ENCODE measurements at regions of chr12 and their contacts with region 1.

Region 1: GRCh38 chr12:68821357-68822188 is 13.6 kb downstream of the MDM2 start:
- DNase-seq: no peak
- ATAC-seq: peak; percentile 53
- H3K4me3 ChIP-seq: no peak overlapping the region
- H3K27ac ChIP-seq: no peak overlapping the region
- H3K4me1 ChIP-seq: no peaks in the 10 kb centered on the region
- H3K27me3 ChIP-seq: no peaks in the 10 kb centered on the region
- CTCF ChIP-seq: no peak

Region 2: DNA sequence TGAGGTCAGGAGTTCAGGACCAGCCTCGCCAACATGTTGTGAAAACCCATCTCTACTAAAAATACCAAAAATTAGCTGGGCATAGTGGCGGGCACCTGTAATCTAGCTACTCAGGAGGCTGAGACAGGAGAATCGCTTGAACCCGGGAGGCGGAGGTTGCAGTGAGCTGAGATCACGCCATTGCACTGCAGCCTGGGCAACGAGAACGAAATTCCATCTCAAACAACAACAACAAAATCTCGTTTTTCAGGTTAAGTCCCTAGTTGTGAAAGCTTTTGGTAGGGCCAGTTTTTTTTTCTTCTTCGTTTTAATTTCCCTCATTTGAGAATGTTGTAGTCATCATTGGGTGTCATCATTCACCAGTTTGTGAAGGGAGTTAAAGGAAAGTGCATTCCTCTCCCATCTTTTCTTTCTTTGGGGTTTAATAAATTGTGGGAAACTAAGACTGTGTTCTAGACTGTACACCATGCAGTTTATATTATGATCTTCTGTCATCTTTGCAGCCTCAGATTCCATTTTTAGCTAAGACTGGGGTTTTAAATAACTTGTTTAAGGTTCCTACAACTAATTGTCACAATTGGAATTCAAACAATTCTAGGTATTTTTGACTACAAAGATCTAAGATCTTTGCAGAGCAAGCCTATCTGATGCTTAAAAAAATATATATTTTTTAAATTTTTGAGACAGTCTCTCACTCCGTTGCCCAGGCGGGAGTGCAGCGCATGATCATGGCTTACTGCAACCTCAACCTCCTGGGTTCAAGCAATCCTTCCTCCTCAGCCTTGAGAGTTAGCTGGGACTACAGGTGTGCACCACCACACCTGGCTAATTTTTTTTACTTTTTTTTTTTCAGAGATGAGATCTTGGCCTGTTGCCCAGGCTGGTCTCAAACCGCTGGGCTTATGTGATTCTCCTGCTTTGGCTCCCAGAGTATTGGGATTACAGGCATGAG is 10.6 kb after region 1 on chr12:
- CTCF ChIA-PET with region 1: no interaction called
- POLR2A ChIA-PET with region 1: interaction called, 12 read pairs
- in situ Hi-C with region 1: no loop called
- intact Hi-C with region 1: no loop called
- DNase-seq: no peak
- ATAC-seq: no peak
- H3K4me3 ChIP-seq: no peak overlapping the region
- H3K27ac ChIP-seq: no peak overlapping the region
- H3K4me1 ChIP-seq: no peaks in the 10 kb centered on the region
- H3K27me3 ChIP-seq: no peaks in the 10 kb centered on the region
- CTCF ChIP-seq: no peak

Region 3: DNA sequence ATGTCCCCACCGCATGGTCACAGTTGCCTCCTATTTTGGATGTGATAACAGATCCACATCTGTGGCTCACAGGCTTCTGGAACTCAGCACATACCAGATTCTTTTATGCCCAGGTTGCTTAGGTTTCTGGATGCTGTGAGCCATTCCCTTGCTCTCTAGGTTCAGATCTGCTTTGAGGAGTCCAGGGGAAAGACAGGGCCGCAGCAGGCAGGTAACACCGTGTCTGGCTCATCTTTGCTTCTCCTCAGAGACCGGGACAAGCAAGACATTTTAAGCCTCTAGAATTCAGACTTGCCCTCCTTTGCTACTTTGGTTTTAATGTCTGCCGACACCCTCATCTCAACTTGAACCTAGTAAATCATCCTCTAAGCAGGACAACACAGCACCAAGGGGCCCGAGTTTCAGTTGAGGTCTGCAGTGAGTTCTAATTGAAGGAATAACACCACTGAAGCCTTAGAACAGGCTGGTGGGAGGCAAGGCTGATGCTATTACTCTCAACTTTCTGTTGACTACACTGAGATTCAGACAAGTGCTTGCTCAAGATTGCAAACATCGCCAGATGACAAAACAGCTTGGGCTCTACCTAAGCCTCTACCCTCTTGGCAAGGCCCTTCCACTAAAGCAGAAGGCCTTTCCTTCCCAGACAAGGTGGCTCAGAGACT is 41.7 kb after region 1 on chr12:
- CTCF ChIA-PET with region 1: no interaction called
- POLR2A ChIA-PET with region 1: no interaction called
- in situ Hi-C with region 1: no loop called
- intact Hi-C with region 1: no loop called
- DNase-seq: no peak
- ATAC-seq: 0 out of 2 replicates have a peak, but pooled peaks have one; percentile 44
- H3K4me3 ChIP-seq: no peak overlapping the region
- H3K27ac ChIP-seq: no peak overlapping the region
- H3K4me1 ChIP-seq: no peaks in the 10 kb centered on the region
- H3K27me3 ChIP-seq: no peaks in the 10 kb centered on the region
- CTCF ChIP-seq: no peak